Mammary epithelial cell (primary cell): ENCODE measurements at regions of chr1 and their contacts with region 1.

Region 1: GRCh38 chr1:91827087-91827458 is 58.9 kb downstream of the TGFBR3 start:
- DNase-seq: peak; percentile 51
- H3K4me3 ChIP-seq: no peak overlapping the region
- H3K27ac ChIP-seq: no peak overlapping the region
- H3K4me1 ChIP-seq: no peaks in the 10 kb centered on the region
- H3K27me3 ChIP-seq: peaks cover 50% of the 10 kb centered on the region
- CTCF ChIP-seq: no peak

Region 2: DNA sequence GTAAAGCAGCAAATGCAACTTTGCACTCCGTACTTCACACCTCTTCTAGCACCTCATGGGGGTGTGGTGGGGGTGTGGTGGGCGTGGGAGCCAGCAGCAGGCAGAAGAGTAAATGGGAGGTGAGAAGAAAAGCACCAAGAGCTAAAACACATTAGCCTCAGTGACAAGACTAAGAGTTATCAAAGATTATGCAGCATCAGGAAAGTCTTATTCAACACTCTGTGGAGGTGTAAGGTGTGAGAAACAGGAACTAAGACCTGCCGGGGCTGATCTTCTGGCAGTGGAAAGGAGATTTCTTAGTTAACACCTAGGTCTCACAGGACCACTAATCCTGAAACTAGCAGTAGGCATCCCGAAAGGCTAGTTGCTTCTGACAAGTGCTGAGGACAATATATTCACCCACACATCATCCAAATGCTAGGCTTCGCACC is 49.0 kb after region 1 on chr1:
- CTCF ChIA-PET with region 1: no interaction called
- dilution Hi-C with region 1: no loop called
- in situ Hi-C with region 1: loop called in 1 of 2 experiments (anchors 10 kb)
- intact Hi-C with region 1: no loop called
- DNase-seq: no peak
- H3K4me3 ChIP-seq: no peak overlapping the region
- H3K27ac ChIP-seq: no peak overlapping the region
- H3K4me1 ChIP-seq: peaks cover 12% of the 10 kb centered on the region
- H3K27me3 ChIP-seq: peaks cover 29% of the 10 kb centered on the region
- CTCF ChIP-seq: no peak

Region 3: GRCh38 chr1:92441697-92442342 is 614.7 kb after region 1 on chr1:
- CTCF ChIA-PET with region 1: no interaction called
- dilution Hi-C with region 1: no loop called
- in situ Hi-C with region 1: no loop called
- intact Hi-C with region 1: no loop called
- DNase-seq: no peak
- H3K4me3 ChIP-seq: no peak overlapping the region
- H3K27ac ChIP-seq: no peak overlapping the region
- H3K4me1 ChIP-seq: no peaks in the 10 kb centered on the region
- H3K27me3 ChIP-seq: no peaks in the 10 kb centered on the region
- CTCF ChIP-seq: no peak